Activated T-helper 1 cell treated with anti-CD3 and anti-CD28 coated beads, Interleukin-12 subunit alpha, Interleukin-12 subunit beta, Interleukin-2, Interleukin-4 antibody, amounts not matched to agents 30 ng/mL and 10 ng/mL and 1 ng/mL, durations not matched to agents 14 hours and 24 hours and 36 hours (primary cell): ENCODE measurements at regions of chr5 and their contacts with region 1.

Region 1: GRCh38 chr5:139403787-139404483 is at the start of gene SPATA24:
- DNase-seq: peak; percentile 98
- H3K4me3 Mint-ChIP-seq: peak within 1 kb of the TSS; percentile 91
- H3K27ac Mint-ChIP-seq: peak within 1 kb of the TSS; percentile 100
- H3K4me1 Mint-ChIP-seq: peaks cover 47% of the 10 kb centered on the region
- H3K27me3 Mint-ChIP-seq: no peaks in the 10 kb centered on the region
- total RNA-seq, gene SPATA24: 4.1 and 5.3 TPM in 2 replicates

Region 2: DNA sequence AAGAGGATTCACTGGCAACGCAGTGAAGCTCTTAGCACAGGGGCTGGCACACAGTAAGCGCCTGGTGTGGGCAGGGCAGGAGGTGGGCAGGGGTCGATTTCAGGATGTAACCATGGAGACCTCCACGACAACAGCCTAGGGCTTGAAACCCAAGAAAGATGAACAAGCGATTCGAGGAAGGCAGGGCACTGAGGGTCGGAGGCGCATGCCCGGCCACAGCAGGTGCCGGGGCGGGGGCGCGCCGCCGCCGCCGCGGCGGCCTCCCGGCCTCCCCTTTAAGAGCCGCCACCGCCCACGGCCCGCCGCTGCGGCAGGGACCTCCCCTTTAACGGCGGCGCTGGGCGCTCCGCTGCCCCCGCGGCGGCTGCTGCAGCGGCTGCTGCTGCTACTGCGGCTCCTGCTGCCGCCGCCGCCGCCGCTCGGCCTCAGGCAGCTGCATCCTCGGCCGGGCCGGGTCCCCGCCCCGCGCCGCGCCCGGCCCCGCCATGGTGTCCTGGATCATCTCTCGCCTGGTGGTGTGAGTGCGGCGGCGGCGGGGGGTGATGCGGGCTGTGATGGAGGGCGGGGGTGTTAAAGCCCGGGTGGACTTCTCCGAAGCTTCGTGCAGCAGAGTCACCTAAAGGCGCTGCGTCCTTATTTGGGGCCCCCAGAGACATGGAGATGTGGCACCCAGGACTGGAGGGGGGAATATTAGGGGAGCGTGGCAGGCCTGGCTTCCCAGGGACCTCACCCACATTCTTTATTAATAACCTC is 965.0 kb before region 1 on chr5 and contains the start of gene REEP2:
- intact Hi-C with region 1: loop called (anchors 1 kb)
- DNase-seq: peak; percentile 53
- H3K4me3 Mint-ChIP-seq: peak within 1 kb of the TSS; percentile 77
- H3K27ac Mint-ChIP-seq: peak within 1 kb of the TSS; percentile 67
- H3K4me1 Mint-ChIP-seq: peaks cover 13% of the 10 kb centered on the region
- H3K27me3 Mint-ChIP-seq: peaks cover 6% of the 10 kb centered on the region
- total RNA-seq, gene REEP2: 5.1 and 5.4 TPM in 2 replicates

Region 3: DNA sequence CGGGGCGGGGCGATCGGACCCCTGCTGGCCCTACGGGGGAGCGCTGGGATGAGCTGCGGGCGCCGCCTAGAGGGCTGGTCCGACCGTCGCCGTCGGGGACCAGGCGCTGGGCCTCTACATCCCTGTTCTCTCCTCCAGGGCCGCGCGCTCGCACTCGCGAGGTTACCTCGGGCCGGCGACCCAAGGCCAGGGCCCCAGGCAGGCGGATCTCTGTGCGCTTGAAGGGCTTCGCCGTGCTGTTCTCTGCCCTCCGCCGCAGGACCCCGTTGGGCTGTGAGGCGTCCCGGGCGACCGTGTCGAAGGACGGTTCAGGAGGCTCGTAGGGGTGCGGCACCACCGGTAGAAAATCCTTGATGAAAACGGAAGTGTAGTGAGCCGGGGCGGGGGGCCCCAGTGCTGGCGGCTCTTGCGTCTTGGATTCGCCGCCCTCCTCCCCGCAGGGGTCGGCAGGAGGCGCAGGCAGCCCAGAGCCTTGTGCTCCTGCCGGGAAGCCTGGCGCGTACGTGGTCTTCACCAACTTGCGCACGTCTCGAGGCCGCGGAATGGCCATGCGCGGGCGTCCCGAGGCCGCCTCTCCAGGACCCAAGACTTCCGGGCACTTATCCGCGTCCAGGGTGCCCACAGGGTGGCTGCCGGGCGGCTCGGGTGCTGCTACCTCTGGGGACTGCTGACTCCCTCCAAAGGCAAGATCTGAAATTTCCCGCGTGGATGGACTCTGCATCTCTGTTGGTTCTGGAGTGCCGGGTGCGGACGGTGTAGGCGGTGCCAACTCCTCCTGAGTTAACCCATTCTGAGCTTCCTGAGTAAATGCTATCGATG is 11.0 kb before region 1 on chr5:
- intact Hi-C with region 1: loop called (anchors 1 kb)
- DNase-seq: peak; percentile 84
- H3K4me3 Mint-ChIP-seq: peak overlapping the region; percentile 96
- H3K27ac Mint-ChIP-seq: peak overlapping the region; percentile 95
- H3K4me1 Mint-ChIP-seq: peaks cover 58% of the 10 kb centered on the region
- H3K27me3 Mint-ChIP-seq: no peaks in the 10 kb centered on the region

Region 4: GRCh38 chr5:139422307-139422893 is 18.5 kb after region 1 on chr5:
- intact Hi-C with region 1: loop called (anchors 2 kb)
- DNase-seq: peak; percentile 54
- H3K4me3 Mint-ChIP-seq: no peak overlapping the region
- H3K27ac Mint-ChIP-seq: peak overlapping the region; percentile 26
- H3K4me1 Mint-ChIP-seq: peaks cover 22% of the 10 kb centered on the region
- H3K27me3 Mint-ChIP-seq: no peaks in the 10 kb centered on the region

Region 5: GRCh38 chr5:139445325-139446070 is 41.6 kb after region 1 on chr5:
- intact Hi-C with region 1: no loop called
- DNase-seq: no peak
- H3K4me3 Mint-ChIP-seq: no peak overlapping the region
- H3K27ac Mint-ChIP-seq: peak overlapping the region; percentile 62
- H3K4me1 Mint-ChIP-seq: peaks cover 75% of the 10 kb centered on the region
- H3K27me3 Mint-ChIP-seq: no peaks in the 10 kb centered on the region

Region 6: GRCh38 chr5:139482050-139482889 is 78.3 kb after region 1 on chr5 and contains the start of gene STING1:
- intact Hi-C with region 1: loop called (anchors 1 kb)
- DNase-seq: peak; percentile 57
- H3K4me3 Mint-ChIP-seq: peak within 1 kb of the TSS; percentile 90
- H3K27ac Mint-ChIP-seq: peak within 1 kb of the TSS; percentile 88
- H3K4me1 Mint-ChIP-seq: peaks cover 45% of the 10 kb centered on the region
- H3K27me3 Mint-ChIP-seq: no peaks in the 10 kb centered on the region
- total RNA-seq, gene STING1: 213 and 226 TPM in 2 replicates